Esophagus muscularis mucosa (tissue), 4 donors: ENCODE measurements at regions of chr4 and their contacts with region 1.

Region 1: DNA sequence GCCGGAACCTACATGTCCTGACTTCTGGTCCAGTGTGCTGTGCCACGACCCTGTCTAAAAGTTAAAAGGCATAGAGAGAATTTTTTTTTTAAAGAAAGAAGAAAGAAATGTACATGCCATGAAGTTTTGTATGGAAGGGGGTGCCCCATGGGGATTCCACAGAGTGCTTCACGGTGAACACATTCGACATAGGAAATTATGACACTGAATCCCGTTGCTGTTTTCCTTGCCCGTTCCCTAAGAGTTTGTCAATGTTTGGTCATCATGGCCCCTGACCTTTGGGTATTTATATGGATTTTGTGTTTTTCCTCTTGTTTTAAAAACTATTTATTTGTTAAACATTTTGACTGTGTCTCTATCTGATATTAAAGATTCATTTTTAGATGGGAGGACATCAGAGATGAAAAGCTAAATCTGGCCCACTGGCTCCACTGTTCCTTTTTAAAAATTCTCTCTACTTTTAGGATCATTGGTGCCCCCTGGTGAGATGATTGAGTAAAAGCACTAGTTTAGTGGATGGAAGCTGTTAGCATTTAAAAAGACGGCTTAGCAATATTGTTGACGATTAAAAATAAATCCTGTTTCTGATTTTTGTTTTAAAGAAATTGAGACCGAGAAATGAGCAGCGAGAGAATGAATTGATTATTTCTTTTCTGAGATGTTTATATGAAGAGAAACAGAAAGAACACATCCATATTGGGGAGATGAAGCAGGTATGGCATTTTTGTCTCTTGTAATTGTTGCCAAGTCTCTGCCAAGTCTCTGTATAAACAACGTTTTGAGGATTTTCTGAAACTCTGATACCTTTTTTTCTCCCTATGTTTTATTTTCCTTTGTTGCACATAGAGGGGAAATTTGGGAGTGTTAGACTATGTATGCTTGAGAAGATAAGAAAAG is 75.0 kb downstream of the PTTG2 start:
- DNase-seq: no peak
- H3K4me3 ChIP-seq: no peak overlapping the region
- H3K27ac ChIP-seq: peak overlapping the region in 3 of 4 donors; percentile 11 to 53 (median 35)
- H3K4me1 ChIP-seq: peaks cover 6 to 14% (median 12%) of the 10 kb centered on the region in 4 donors
- H3K27me3 ChIP-seq: no peaks in the 10 kb centered on the region
- CTCF ChIP-seq: peak; percentile 69 to 78 (median 70)
- EP300 ChIP-seq: no peak
- POLR2A ChIP-seq: no peak

Region 2: GRCh38 chr4:37603070-37603468 is 432.2 kb before region 1 on chr4:
- intact Hi-C with region 1: loop called (anchors 2 kb)
- DNase-seq: peak; percentile 96
- H3K4me3 ChIP-seq: no peak overlapping the region
- H3K27ac ChIP-seq: no peak overlapping the region
- H3K4me1 ChIP-seq: peaks cover 4 to 7% (median 6%) of the 10 kb centered on the region in 4 donors
- H3K27me3 ChIP-seq: no peaks in the 10 kb centered on the region
- CTCF ChIP-seq: peak; percentile 98 to 99 (median 99)
- EP300 ChIP-seq: no peak
- POLR2A ChIP-seq: no peak

Region 3: DNA sequence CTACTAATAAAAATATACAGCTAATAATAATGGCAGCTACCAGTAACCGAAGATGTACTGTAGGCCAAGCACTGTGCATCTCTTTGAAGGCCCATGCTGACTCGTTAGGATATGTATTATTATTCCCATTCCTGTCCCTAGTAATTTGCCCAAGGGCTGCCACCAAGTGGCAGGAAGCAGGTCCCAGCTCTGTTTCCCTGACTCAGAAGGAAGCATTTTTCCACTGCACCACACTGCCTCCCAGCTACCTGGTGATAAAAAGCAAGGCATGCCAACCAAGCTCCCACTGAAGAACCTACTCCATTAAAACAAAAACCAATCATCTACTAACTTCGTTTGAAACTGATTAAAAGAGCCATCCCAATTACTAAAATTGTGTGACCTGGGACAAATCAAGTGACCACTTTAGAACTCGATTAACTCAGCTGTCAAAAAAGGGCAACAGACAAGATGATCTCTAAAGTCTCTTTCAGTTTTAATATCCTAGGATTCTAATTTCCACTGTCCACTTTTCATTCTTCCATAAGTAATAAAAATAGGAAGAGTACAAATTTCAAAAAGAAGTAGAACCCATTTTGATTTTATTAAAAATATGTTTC is 233.1 kb before region 1 on chr4:
- intact Hi-C with region 1: loop called (anchors 2 kb)
- DNase-seq: no peak
- H3K4me3 ChIP-seq: no peak overlapping the region
- H3K27ac ChIP-seq: no peak overlapping the region
- H3K4me1 ChIP-seq: no peaks in the 10 kb centered on the region
- H3K27me3 ChIP-seq: no peaks in the 10 kb centered on the region
- CTCF ChIP-seq: peak; percentile 57 to 77 (median 59)
- EP300 ChIP-seq: no peak
- POLR2A ChIP-seq: no peak

Region 4: DNA sequence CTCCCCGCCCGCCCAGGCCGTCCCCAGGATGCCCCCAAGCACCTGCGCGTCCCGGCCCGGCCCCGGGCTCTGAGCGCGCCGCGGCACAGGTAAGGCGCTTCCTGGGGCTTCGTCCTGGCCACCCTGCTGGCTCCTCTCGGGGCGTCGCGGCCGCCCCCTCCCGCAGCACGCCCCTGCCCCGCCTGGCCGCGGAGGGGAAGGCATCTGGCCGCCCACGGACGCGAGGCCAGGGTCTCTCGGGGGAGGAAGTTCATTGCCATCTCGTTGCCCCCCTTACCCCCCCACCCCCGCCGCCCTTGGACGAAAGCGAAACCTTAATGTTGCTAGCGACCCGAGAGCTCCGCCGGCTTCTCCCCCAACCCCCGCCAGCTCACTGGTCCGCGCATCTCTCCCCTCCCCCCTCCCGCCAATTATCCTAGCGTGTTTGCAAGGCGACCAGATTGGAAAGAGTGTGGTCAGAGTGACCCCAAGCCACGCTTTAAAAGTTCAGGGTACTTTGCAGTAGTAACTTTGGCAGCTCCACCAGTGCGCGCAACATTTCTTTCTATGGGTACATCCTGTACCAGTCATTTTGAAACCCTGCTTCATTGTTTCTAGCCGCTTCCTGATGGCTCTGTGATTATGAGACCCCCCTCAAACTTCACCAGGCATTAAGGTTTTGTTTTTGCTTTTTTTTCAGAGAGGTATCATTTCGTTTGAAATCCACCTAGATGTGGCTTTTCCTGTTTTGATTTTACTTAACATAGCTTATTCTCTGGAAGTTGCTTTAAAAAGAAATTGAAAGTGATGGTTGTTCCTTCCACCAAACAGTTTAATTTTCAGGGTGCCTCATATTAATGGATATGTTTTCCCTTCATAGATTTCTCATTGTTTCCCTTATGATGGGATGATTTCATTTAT is 143.7 kb before region 1 on chr4:
- intact Hi-C with region 1: loop called (anchors 5 kb)
- DNase-seq: no peak
- H3K4me3 ChIP-seq: peak overlapping the region; percentile 95 to 99 (median 96)
- H3K27ac ChIP-seq: peak overlapping the region; percentile 94 to 98 (median 97)
- H3K4me1 ChIP-seq: peaks cover 18 to 71% (median 55%) of the 10 kb centered on the region in 4 donors
- H3K27me3 ChIP-seq: no peaks in the 10 kb centered on the region
- CTCF ChIP-seq: peak in 1 of 3 experiments; percentile 32
- EP300 ChIP-seq: no peak
- POLR2A ChIP-seq: no peak